Sigmoid colon (tissue), 7 donors: ENCODE measurements at regions of chr1 and their contacts with region 1.

Region 1: GRCh38 chr1:202189001-202189790 is 4.4 kb upstream of the LGR6 start:
- DNase-seq: no peak
- H3K4me3 ChIP-seq: no peak overlapping the region
- H3K27ac ChIP-seq: no peak overlapping the region
- H3K4me1 ChIP-seq: peaks cover 0 to 20% (median 9%) of the 10 kb centered on the region in 4 donors
- H3K27me3 ChIP-seq: peaks cover 11 to 24% (median 17%) of the 10 kb centered on the region in 3 donors
- CTCF ChIP-seq: peak in 3 of 4 experiments; percentile 45 to 91 (median 48)
- EP300 ChIP-seq: no peak
- POLR2A ChIP-seq: no peak

Region 2: DNA sequence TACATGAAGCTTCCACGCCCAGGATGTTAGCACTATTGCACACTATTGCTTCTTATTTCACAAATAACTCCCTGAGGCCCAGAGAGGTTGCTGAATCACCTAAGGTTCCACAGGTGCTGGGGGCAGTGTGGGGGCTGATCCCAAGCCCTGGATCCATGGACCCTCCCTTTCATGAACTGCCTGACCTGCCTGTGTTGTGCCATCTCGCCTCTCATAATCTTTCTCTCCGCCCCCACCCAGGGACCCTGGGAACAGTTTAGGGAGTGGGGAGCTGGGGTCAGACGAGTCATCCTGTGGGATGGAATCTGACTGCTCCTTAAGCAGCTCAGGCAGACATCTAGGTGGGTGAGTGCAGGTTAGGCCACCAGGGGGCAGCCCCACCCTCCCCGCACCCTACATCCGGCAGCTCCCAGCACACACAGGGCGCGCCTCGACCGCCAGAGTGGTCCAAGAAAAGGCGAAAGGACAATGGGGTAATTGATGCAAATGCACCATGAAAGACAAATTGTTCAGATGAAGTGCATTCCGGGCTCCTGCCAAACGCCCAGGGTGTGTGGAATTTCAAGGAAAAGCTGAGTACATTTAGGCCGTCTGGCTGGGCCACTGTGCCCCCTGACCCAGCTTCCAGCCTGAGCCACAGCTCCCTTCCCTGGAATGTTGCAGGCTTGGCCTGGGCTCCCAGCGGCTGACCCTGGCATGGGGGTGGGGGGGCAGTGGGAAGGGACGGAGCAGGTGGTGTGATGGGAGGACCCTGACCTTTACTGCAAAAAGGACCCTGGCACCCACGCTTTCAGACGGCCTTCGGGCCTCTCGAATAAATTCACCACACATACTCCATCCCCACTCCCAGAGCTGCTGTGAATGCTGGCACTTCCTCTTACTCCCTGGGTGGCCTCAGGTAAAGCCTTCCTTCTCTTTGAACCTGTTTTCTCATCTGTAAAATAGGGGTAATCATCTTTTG is 741.0 kb before region 1 on chr1:
- intact Hi-C with region 1: no loop called
- DNase-seq: peak; percentile 93
- H3K4me3 ChIP-seq: no peak overlapping the region
- H3K27ac ChIP-seq: peak overlapping the region; percentile 9 to 78 (median 68)
- H3K4me1 ChIP-seq: peaks cover 0 to 35% (median 34%) of the 10 kb centered on the region in 4 donors
- H3K27me3 ChIP-seq: no peaks in the 10 kb centered on the region
- CTCF ChIP-seq: peak; percentile 78 to 92 (median 84)
- EP300 ChIP-seq: peak in 1 of 4 donors; percentile 41
- POLR2A ChIP-seq: no peak

Region 3: DNA sequence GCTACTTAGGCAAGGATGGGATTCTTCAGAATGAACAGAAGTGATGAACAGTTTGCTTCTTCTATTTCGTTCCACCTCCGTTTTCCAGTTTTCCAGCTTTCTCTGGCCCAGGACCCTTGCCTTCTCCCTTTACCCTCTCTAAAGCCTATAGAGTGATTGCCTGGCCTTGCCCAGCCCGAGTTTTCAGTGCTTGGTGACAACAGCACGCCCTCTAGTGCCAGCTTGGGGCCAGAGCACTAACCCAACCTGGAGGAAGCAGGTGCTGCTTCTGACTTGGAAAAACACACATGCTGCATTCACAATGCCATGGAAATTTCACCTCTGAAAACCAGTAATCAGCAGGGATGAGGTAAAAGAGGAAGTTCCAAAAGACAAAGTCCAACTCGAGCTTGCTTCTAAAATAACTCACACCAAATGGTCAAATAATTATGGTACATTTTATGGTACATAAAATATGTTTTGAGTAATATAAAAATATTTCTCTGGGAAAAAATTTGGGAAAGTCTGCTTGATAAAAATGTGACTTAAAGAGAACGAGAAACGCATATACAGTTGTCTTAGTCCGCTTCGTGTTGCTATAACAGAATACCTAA is 126.5 kb after region 1 on chr1:
- intact Hi-C with region 1: loop called (anchors 2 kb)
- DNase-seq: no peak
- H3K4me3 ChIP-seq: no peak overlapping the region
- H3K27ac ChIP-seq: no peak overlapping the region
- H3K4me1 ChIP-seq: no peaks in the 10 kb centered on the region
- H3K27me3 ChIP-seq: peaks cover 0 to 8% (median 0%) of the 10 kb centered on the region in 3 donors
- CTCF ChIP-seq: peak; percentile 46 to 76 (median 76)
- EP300 ChIP-seq: no peak
- POLR2A ChIP-seq: no peak